WTC11 (cell line): ENCODE measurements at regions of chr12 and their contacts with region 1.

Region 1: GRCh38 chr12:56521590-56522371 is at the start of gene RBMS2:
- DNase-seq: peak; percentile 79
- ATAC-seq: peak; percentile 95
- H3K4me3 Mint-ChIP-seq: peak within 1 kb of the TSS; percentile 87
- H3K27ac Mint-ChIP-seq: peak within 1 kb of the TSS; percentile 88
- H3K4me1 Mint-ChIP-seq: peaks cover 37% of the 10 kb centered on the region
- H3K27me3 Mint-ChIP-seq: no peaks in the 10 kb centered on the region
- CTCF ChIP-seq: no peak
- total RNA-seq, gene RBMS2: 11.8 to 16.7 TPM (median 16.1 TPM) in 3 replicates

Region 2: GRCh38 chr12:56299853-56300643 is 221.7 kb before region 1 on chr12 and contains the start of gene CS:
- CTCF ChIA-PET with region 1: no interaction called
- POLR2A ChIA-PET with region 1: no interaction called
- DNase-seq: peak; percentile 99
- ATAC-seq: peak; percentile 98
- H3K4me3 Mint-ChIP-seq: peak within 1 kb of the TSS; percentile 92
- H3K27ac Mint-ChIP-seq: peak within 1 kb of the TSS; percentile 99
- H3K4me1 Mint-ChIP-seq: peaks cover 26% of the 10 kb centered on the region
- H3K27me3 Mint-ChIP-seq: no peaks in the 10 kb centered on the region
- CTCF ChIP-seq: no peak
- total RNA-seq, gene CS: 241 to 275 TPM (median 246 TPM) in 3 replicates

Region 3: GRCh38 chr12:56474409-56474808 is 47.4 kb before region 1 on chr12:
- CTCF ChIA-PET with region 1: no interaction called
- POLR2A ChIA-PET with region 1: no interaction called
- DNase-seq: no peak
- ATAC-seq: no peak
- H3K4me3 Mint-ChIP-seq: no peak overlapping the region
- H3K27ac Mint-ChIP-seq: no peak overlapping the region; the same call in 1 of the 2 replicates
- H3K4me1 Mint-ChIP-seq: peaks cover 4% of the 10 kb centered on the region; the same call in 1 of the 2 replicates
- H3K27me3 Mint-ChIP-seq: no peaks in the 10 kb centered on the region
- CTCF ChIP-seq: no peak

Region 4: GRCh38 chr12:56571126-56571525 is 49.3 kb after region 1 on chr12:
- CTCF ChIA-PET with region 1: interaction called, 12 read pairs
- POLR2A ChIA-PET with region 1: interaction called, 6 read pairs
- DNase-seq: no peak
- ATAC-seq: peak; percentile 38; the same call in 1 of the 2 replicates
- H3K4me3 Mint-ChIP-seq: no peak overlapping the region
- H3K27ac Mint-ChIP-seq: no peak overlapping the region
- H3K4me1 Mint-ChIP-seq: peaks cover 2% of the 10 kb centered on the region; the same call in 1 of the 2 replicates
- H3K27me3 Mint-ChIP-seq: no peaks in the 10 kb centered on the region
- CTCF ChIP-seq: no peak

Region 5: DNA sequence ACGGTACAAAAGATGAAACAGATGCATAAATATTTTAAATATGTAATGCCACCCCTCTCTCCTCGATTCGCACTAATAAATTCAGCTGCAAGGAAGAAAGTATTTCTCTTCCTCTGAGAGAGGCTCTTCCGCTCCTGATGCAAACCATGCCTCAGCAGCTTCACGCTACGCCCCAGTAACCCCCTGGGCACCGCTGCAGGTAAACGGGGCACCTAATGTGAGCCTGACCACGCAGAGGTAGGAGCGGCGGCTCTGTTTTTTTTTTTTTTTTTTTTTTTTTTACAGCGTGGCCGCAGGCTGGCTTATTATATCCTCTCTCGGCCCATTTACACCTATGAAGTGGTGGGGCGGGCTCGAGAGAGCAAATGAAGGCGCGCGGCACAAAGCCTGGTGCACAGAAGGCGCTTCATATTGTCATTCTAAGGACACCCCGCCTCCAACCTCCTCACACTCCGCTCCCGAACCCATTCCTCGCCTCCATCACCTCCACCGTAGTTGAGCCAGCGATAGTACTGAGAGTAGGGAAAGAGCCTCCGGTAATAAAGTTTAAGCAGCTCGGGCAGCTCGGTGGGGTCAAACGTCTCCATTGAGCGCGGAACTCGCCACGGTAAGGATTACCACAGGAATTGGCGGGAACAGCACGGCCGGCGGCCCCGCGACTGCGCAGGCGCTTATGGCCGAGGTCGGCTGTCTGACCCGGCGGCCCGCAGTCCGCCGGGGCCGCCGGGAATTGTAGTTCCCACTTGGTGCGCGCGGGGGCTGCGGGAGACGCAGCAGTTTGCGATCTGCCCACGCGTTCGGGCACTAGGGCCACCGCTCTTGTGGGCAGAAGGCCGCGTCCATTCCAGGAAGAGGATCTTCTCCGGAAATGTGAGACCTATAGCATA is 230.2 kb after region 1 on chr12 and contains the start of gene PRIM1:
- CTCF ChIA-PET with region 1: no interaction called
- POLR2A ChIA-PET with region 1: no interaction called
- DNase-seq: peak; percentile 89
- ATAC-seq: peak; percentile 86
- H3K4me3 Mint-ChIP-seq: peak within 1 kb of the TSS; percentile 92
- H3K27ac Mint-ChIP-seq: peak within 1 kb of the TSS; percentile 98
- H3K4me1 Mint-ChIP-seq: peaks cover 17% of the 10 kb centered on the region
- H3K27me3 Mint-ChIP-seq: peaks cover 2% of the 10 kb centered on the region; the same call in 1 of the 2 replicates
- CTCF ChIP-seq: no peak
- total RNA-seq, gene PRIM1: 51.7 to 54.5 TPM (median 54.0 TPM) in 3 replicates